ENCODE measurements at regions of chr1 and their contacts with region 1.

Region 1: GRCh38 chr1:85628791-85629531 is 48.4 kb downstream of the CCN1 start:
- DNase-seq: no peak

Region 2: GRCh38 chr1:85584264-85584781 is 44.6 kb before region 1 on chr1:
- intact Hi-C with region 1: loop called in 1 of 2 experiments (anchors 2 kb)
- DNase-seq: no peak